ENCODE measurements at regions of chr6 and their contacts with region 1.

Region 1: GRCh38 chr6:166775180-166776081 is 148.4 kb upstream of the RPS6KA2 start:
- DNase-seq: peak; percentile 24 to 82 (median 71)
- ATAC-seq: peak; percentile 91
- H3K4me3 ChIP-seq: no peak overlapping the region
- H3K4me3 Mint-ChIP-seq: no peak overlapping the region
- H3K27ac ChIP-seq: no peak overlapping the region
- H3K27ac Mint-ChIP-seq: peak overlapping the region in 1 of 9 donors; percentile 61
- H3K4me1 ChIP-seq: no peaks in the 10 kb centered on the region
- H3K4me1 Mint-ChIP-seq: peaks cover 0 to 9% (median 5%) of the 10 kb centered on the region in 7 donors
- H3K27me3 ChIP-seq: no peaks in the 10 kb centered on the region
- H3K27me3 Mint-ChIP-seq: peaks cover 0 to 8% (median 0%) of the 10 kb centered on the region in 5 donors

Region 2: GRCh38 chr6:166005944-166006899 is 769.2 kb before region 1 on chr6:
- CTCF ChIA-PET with region 1: no interaction called
- POLR2A ChIA-PET with region 1: no interaction called
- intact Hi-C with region 1: no loop called
- DNase-seq: no peak
- ATAC-seq: no peak
- H3K4me3 ChIP-seq: no peak overlapping the region
- H3K4me3 Mint-ChIP-seq: peak overlapping the region in 3 of 10 donors; percentile 19 to 33 (median 30)
- H3K27ac ChIP-seq: no peak overlapping the region
- H3K27ac Mint-ChIP-seq: no peak overlapping the region
- H3K4me1 ChIP-seq: no peaks in the 10 kb centered on the region
- H3K4me1 Mint-ChIP-seq: peaks cover 0 to 15% (median 4%) of the 10 kb centered on the region in 7 donors
- H3K27me3 ChIP-seq: no peaks in the 10 kb centered on the region
- H3K27me3 Mint-ChIP-seq: peaks cover 60 to 79% (median 73%) of the 10 kb centered on the region in 5 donors

Region 3: GRCh38 chr6:166275714-166276166 is 499.7 kb before region 1 on chr6:
- CTCF ChIA-PET with region 1: no interaction called
- POLR2A ChIA-PET with region 1: no interaction called
- intact Hi-C with region 1: loop called in 1 of 2 experiments (anchors 1 kb)
- DNase-seq: peak; percentile 49 to 92 (median 78)
- ATAC-seq: peak; percentile 95
- H3K4me3 ChIP-seq: no peak overlapping the region
- H3K4me3 Mint-ChIP-seq: peak overlapping the region in 1 of 10 donors; percentile 35
- H3K27ac ChIP-seq: no peak overlapping the region
- H3K27ac Mint-ChIP-seq: peak overlapping the region in 4 of 9 donors; percentile 30 to 85 (median 74)
- H3K4me1 ChIP-seq: peaks cover 0 to 4% of the 10 kb centered on the region in 2 donors
- H3K4me1 Mint-ChIP-seq: peaks cover 0 to 7% (median 6%) of the 10 kb centered on the region in 7 donors
- H3K27me3 ChIP-seq: no peaks in the 10 kb centered on the region
- H3K27me3 Mint-ChIP-seq: peaks cover 0 to 15% (median 0%) of the 10 kb centered on the region in 5 donors

Region 4: GRCh38 chr6:166664135-166664534 is 111.3 kb before region 1 on chr6:
- CTCF ChIA-PET with region 1: no interaction called
- POLR2A ChIA-PET with region 1: no interaction called
- intact Hi-C with region 1: no loop called
- DNase-seq: no peak
- ATAC-seq: no peak
- H3K4me3 ChIP-seq: no peak overlapping the region
- H3K4me3 Mint-ChIP-seq: no peak overlapping the region
- H3K27ac ChIP-seq: no peak overlapping the region
- H3K27ac Mint-ChIP-seq: no peak overlapping the region
- H3K4me1 ChIP-seq: no peaks in the 10 kb centered on the region
- H3K4me1 Mint-ChIP-seq: peaks cover 0 to 10% (median 3%) of the 10 kb centered on the region in 7 donors
- H3K27me3 ChIP-seq: no peaks in the 10 kb centered on the region
- H3K27me3 Mint-ChIP-seq: peaks cover 0 to 9% (median 8%) of the 10 kb centered on the region in 5 donors

Region 5: DNA sequence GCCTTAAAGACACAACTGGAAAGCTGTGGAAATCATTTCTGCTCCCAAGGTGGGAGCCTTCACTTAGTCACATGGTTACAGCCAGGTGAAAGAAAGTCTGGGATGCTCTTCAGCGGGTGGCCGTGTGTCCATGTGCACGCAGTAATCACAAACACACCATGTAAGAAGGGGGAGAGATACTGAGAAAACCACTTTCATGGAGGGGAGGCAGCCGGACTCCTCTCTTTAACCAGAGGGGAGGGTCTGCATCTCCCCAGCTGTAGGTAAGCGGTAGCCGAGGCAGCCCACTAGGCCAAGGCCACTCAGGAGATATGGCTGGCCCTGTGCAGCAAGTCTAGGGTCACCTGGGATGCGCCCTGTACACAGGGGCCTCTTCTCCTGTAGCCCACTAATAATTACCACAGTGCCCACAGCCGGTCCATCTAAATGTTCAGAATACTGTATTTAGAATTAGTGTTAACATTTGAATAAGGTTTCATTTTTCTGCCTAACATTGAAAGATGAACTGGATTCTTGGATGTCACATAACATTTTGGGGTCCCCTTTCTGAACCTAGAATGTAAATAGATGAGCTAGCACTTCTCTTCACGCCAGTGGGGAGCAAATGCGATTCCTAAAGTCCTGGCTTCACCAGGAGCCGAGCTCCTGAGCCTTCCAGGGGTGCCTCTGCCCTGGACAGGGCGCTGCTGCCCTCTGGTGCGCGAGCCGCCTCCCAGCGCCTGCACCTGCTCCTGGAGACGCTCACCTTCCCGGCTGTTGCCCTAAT is 366.4 kb after region 1 on chr6:
- CTCF ChIA-PET with region 1: interaction called, 5 read pairs
- POLR2A ChIA-PET with region 1: no interaction called
- intact Hi-C with region 1: loop called (anchors 1 kb)
- DNase-seq: peak; percentile 9 to 54 (median 41)
- ATAC-seq: peak; percentile 84
- H3K4me3 ChIP-seq: no peak overlapping the region
- H3K4me3 Mint-ChIP-seq: no peak overlapping the region
- H3K27ac ChIP-seq: no peak overlapping the region
- H3K27ac Mint-ChIP-seq: no peak overlapping the region
- H3K4me1 ChIP-seq: peaks cover 0 to 4% of the 10 kb centered on the region in 2 donors
- H3K4me1 Mint-ChIP-seq: peaks cover 0 to 6% (median 0%) of the 10 kb centered on the region in 7 donors
- H3K27me3 ChIP-seq: no peaks in the 10 kb centered on the region
- H3K27me3 Mint-ChIP-seq: peaks cover 0 to 21% (median 12%) of the 10 kb centered on the region in 5 donors

Region 6: GRCh38 chr6:167291623-167292300 is 516.3 kb after region 1 on chr6:
- CTCF ChIA-PET with region 1: interaction called, 12 read pairs
- POLR2A ChIA-PET with region 1: no interaction called
- intact Hi-C with region 1: loop called (anchors 1 to 2 kb)
- DNase-seq: no peak
- ATAC-seq: no peak
- H3K4me3 ChIP-seq: no peak overlapping the region
- H3K4me3 Mint-ChIP-seq: no peak overlapping the region
- H3K27ac ChIP-seq: no peak overlapping the region
- H3K27ac Mint-ChIP-seq: no peak overlapping the region
- H3K4me1 ChIP-seq: no peaks in the 10 kb centered on the region
- H3K4me1 Mint-ChIP-seq: no peaks in the 10 kb centered on the region
- H3K27me3 ChIP-seq: no peaks in the 10 kb centered on the region
- H3K27me3 Mint-ChIP-seq: peaks cover 3 to 11% (median 4%) of the 10 kb centered on the region in 5 donors